ENCODE measurements at regions of chr9 and their contacts with region 1.

Region 1: GRCh38 chr9:99445371-99445891 is 223.3 kb downstream of the SEC61B start:
- DNase-seq: peak; percentile 78
- ATAC-seq: peak; percentile 97

Region 2: DNA sequence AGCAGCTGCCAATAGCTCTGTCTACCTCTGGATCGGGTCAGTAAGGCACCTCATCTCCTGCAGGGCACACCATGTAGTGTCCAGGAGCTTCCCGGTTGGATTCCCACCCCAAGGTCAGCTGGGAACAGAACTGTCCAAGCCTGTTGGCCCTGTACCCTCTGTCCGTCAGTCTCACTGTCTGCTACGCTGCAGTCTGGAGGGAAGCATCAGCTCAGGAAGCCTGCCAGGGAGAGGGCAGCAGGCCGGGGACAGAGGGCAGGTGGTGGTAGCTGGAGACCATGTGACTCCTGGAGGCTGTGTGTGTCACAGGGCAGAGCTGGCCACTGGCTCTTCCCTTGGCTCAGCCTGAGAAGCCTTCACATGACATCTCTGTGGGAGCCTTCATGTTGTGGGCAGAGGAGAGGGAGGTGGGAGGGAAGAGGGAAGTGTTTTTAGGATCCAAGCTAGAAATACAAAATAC is 88.9 kb before region 1 on chr9:
- intact Hi-C with region 1: loop called (anchors 1 kb)
- DNase-seq: peak; percentile 81
- ATAC-seq: peak; percentile 71

Region 3: GRCh38 chr9:99555792-99556191 is 110.4 kb after region 1 on chr9:
- intact Hi-C with region 1: loop called (anchors 2 kb)
- DNase-seq: no peak
- ATAC-seq: no peak

Region 4: GRCh38 chr9:99563364-99563763 is 117.9 kb after region 1 on chr9:
- intact Hi-C with region 1: loop called (anchors 2 kb)
- DNase-seq: no peak
- ATAC-seq: no peak

Region 5: DNA sequence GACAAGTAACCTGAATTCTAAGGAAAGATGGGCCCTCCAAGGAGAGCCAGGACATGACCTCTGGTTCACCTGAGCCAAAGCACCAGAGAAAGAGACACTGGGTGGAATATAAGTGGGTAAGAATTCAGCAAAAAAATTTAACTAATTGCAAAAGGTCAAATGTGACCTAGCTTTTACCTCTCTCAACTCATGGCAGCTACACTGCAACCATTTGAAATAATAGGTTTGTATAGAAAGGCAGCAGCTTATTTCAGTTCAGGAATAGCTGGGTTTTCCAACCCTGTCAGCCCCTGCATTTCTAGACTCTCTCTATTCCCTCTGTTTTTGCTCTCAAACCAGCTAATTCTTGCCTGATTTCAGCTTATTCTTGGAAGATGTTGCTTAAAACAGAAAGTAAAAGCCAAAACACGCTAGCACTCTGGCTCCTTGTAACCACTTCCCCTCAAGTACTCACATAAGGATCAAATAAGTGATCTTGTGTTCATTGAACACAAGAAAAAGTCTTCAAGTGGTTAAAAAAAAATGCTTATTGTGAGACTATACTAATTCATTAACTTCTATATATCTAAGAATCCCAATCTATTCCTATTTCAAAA is 275.1 kb after region 1 on chr9:
- intact Hi-C with region 1: no loop called
- DNase-seq: no peak
- ATAC-seq: no peak